Thyroid gland (tissue), 4 donors: ENCODE measurements at regions of chr1 and their contacts with region 1.

Region 1: DNA sequence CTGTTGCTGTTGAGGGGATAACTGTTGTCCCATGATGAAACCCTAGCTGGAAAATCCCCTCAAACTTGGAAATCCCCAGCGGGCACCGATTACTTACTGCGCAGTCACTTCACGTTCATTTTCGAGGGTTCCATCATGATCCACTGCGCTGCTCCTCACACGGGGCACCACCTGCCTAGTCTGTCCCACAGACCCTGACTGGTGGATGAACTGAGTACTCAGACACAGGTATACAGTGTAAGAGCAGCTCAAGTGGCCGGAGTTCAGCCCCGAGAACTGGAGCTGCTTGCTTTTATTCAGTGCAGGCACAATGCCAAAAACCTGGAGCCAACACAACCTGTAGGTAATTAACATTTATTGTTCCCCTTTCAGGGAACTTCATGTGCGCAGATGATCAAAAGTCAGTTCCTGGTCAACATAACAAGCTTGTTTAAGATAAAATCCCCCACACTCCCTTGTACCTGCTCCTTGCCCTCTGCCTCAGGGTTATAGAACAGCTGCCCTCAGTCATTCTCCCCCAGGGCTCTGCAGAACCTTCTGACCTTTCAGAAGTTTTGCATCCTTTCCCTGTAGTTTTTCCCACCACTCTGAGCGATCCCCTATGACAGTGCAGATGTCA is 46.5 kb upstream of the PRELP start:
- DNase-seq: peak; percentile 69 to 73
- H3K4me3 ChIP-seq: no peak overlapping the region
- H3K27ac ChIP-seq: no peak overlapping the region
- H3K4me1 ChIP-seq: no peaks in the 10 kb centered on the region
- H3K27me3 ChIP-seq: no peaks in the 10 kb centered on the region
- CTCF ChIP-seq: no peak
- POLR2A ChIP-seq: no peak

Region 2: GRCh38 chr1:203381151-203381751 is 47.8 kb before region 1 on chr1:
- intact Hi-C with region 1: loop called (anchors 5 kb)
- DNase-seq: no peak
- H3K4me3 ChIP-seq: no peak overlapping the region
- H3K27ac ChIP-seq: no peak overlapping the region
- H3K4me1 ChIP-seq: no peaks in the 10 kb centered on the region
- H3K27me3 ChIP-seq: no peaks in the 10 kb centered on the region
- CTCF ChIP-seq: no peak
- POLR2A ChIP-seq: no peak

Region 3: DNA sequence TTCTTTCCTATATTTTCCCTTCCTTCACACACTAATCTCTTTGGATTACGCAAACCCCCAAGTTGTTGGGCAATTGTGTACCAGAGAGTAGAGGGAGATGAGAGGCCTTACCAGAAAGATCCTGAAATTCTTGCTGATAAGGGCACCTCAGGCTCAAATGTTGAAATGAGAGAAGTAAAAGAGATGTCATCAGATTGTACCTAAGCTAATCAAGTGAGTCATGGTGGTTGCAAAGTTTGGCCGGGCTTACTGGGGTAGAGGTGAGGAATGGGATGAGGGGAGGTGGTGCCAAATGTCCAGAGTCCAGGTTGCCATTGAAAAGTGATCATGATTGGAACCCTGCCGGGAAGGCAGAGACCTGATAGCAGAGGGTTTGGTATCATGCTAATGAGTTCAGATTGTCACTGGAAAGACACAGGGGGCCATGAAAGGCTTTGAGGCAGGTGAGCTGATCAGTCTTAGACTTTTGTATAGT is 107.9 kb after region 1 on chr1:
- intact Hi-C with region 1: no loop called
- DNase-seq: no peak
- H3K4me3 ChIP-seq: no peak overlapping the region
- H3K27ac ChIP-seq: no peak overlapping the region
- H3K4me1 ChIP-seq: no peaks in the 10 kb centered on the region
- H3K27me3 ChIP-seq: no peaks in the 10 kb centered on the region
- CTCF ChIP-seq: no peak
- POLR2A ChIP-seq: no peak